Activated B cell treated with CpG ODN at 0.5 μM for 24 hours (primary cell): ENCODE measurements at regions of chr7 and their contacts with region 1.

Region 1: DNA sequence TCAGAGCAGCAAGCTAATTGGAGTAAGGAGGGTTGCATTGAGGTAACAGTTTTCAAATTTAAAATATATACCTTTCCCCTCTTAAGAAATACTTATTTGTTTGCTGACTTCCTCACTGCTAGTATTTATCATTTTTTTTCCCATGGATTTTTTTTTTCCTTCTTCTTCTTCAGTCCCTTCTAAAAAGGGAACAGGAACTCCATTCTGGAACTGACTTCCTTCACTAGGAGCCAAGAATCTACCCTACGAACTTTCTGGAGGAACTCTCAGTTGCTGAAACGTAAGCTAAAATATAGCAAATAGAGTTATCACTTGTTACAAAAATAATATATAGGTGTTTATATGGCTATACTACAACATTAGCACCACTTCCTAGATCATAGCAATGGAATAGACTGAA is 95.4 kb downstream of the HGF start:
- DNase-seq: no peak
- ATAC-seq: no peak
- H3K4me3 Mint-ChIP-seq: no peak overlapping the region
- H3K27ac Mint-ChIP-seq: no peak overlapping the region
- H3K4me1 Mint-ChIP-seq: no peaks in the 10 kb centered on the region
- H3K27me3 Mint-ChIP-seq: no peaks in the 10 kb centered on the region
- CTCF ChIP-seq: no peak

Region 2: DNA sequence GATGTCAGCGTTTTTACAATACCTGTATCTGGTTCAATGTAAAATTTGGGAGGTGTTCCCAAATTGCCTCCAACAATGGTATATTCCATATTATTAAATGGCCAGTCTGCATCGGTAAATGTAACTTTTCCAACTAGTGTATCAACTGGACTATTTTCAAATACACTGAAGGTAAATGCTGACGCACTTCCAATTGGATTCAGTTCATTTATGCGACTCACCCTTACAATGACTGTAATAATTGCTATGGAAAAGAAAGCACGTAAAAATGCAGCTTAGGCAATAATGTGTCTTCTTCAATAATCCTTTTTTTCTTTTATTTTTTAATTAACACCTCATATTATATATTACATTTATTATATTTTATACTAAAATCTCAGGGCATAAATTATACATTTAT is 113.7 kb before region 1 on chr7:
- CTCF ChIA-PET with region 1: no interaction called
- POLR2A ChIA-PET with region 1: no interaction called
- intact Hi-C with region 1: no loop called
- DNase-seq: no peak
- ATAC-seq: no peak
- H3K4me3 Mint-ChIP-seq: no peak overlapping the region
- H3K27ac Mint-ChIP-seq: no peak overlapping the region
- H3K4me1 Mint-ChIP-seq: no peaks in the 10 kb centered on the region
- H3K27me3 Mint-ChIP-seq: no peaks in the 10 kb centered on the region
- CTCF ChIP-seq: no peak

Region 3: GRCh38 chr7:81659697-81660395 is 14.6 kb before region 1 on chr7:
- CTCF ChIA-PET with region 1: no interaction called
- POLR2A ChIA-PET with region 1: no interaction called
- intact Hi-C with region 1: loop called (anchors 2 kb)
- DNase-seq: no peak
- ATAC-seq: no peak
- H3K4me3 Mint-ChIP-seq: no peak overlapping the region
- H3K27ac Mint-ChIP-seq: no peak overlapping the region
- H3K4me1 Mint-ChIP-seq: no peaks in the 10 kb centered on the region
- H3K27me3 Mint-ChIP-seq: no peaks in the 10 kb centered on the region
- CTCF ChIP-seq: no peak

Region 4: DNA sequence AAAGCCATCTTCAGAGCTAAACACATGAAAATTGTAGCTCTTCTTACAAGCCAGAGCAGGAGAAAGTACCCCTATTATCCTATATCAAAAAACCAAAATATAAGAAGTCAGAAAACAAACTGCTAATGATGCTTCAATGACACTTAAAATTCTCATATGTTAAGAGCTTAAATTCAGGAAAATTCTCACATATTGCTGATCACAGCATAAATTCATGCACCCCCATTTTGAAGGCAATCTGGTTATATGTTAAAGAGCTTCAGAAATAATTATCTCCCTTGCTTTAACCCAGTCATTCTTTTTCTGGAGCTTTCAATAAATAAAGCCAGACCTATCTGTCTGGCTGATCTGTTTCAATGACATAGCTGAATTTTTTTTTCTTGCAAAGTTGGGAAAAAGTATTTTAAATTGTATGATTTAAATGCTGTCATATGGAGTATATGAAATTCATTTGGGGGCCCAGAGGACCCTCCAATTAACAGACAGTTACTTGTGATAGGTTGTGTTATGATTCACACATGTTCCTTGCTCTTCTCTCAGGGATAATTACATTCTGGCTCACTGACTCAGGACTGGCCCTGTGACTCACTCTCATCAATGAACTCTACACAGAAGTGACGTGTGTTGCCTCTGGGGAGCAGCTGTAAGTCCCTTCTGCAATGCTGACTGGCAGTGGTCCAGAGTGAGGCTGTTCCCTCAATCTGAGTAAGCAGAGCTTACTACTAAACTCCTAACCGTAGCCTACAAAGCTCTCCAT is 10.3 kb after region 1 on chr7:
- CTCF ChIA-PET with region 1: no interaction called
- POLR2A ChIA-PET with region 1: no interaction called
- intact Hi-C with region 1: no loop called
- DNase-seq: no peak
- ATAC-seq: peak; percentile 68
- H3K4me3 Mint-ChIP-seq: no peak overlapping the region
- H3K27ac Mint-ChIP-seq: no peak overlapping the region
- H3K4me1 Mint-ChIP-seq: no peaks in the 10 kb centered on the region
- H3K27me3 Mint-ChIP-seq: no peaks in the 10 kb centered on the region
- CTCF ChIP-seq: no peak